Posterior vena cava (tissue), 2 donors: ENCODE measurements at regions of chr5 and their contacts with region 1.

Region 1: GRCh38 chr5:154065971-154066370 is 27.2 kb downstream of the MFAP3 start:
- DNase-seq: no peak

Region 2: DNA sequence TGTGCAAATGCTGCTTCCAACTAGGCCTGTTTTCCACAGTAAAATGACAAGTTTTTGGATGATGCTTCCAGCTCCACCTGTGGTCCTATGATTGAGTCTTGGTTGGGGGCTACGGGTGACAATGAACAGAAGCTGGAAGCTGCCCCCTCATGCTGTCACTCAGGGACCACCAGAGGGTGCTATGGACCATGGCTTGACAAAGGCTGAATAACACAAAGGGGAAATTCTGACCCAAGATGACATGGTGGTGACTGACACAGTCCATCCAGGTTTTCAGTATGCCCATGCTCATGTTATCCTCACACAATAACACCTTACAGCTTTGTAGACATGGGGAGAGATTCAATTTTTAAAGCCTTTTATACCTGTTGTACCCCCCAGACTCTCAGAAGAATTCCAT is 355.9 kb after region 1 on chr5:
- intact Hi-C with region 1: loop called in 1 of 2 experiments (anchors 5 kb)
- DNase-seq: no peak